PC-9 (cell line): ENCODE measurements at regions of chr1 and their contacts with region 1.

Region 1: DNA sequence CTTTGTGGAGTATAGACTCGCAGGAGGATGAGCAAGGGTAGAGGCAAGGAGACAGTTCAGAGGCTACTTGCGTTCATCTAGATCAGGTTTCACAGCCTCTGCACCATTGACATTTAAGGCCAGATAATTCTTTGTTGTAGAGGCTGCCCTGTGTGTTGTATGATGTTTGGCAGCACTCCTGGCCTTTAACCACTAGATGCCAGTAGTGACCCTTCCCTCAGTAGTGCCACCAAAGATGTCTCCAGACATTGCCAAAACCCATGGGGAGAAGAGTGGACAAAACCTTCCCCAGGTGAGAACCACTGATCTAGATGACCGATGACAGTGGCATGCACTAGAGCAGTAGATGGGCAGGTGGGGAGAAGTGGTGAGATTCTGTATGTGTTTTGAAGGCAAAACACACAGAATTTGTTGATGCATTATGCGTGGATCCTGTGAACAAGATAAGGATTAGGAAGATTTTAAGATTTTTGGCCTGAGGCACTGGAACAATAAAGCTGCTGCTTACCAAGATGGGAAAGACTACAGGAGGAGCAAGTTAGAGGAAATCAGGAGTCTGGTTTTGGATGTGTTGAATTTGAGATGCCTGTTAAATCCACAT is 9.9 kb upstream of the COG2 start:
- DNase-seq: peak; percentile 44 to 53
- H3K4me3 ChIP-seq: no peak overlapping the region
- H3K27ac ChIP-seq: no peak overlapping the region
- H3K4me1 ChIP-seq: no peaks in the 10 kb centered on the region
- H3K27me3 ChIP-seq: peaks cover 37% of the 10 kb centered on the region
- CTCF ChIP-seq: peak; percentile 74

Region 2: DNA sequence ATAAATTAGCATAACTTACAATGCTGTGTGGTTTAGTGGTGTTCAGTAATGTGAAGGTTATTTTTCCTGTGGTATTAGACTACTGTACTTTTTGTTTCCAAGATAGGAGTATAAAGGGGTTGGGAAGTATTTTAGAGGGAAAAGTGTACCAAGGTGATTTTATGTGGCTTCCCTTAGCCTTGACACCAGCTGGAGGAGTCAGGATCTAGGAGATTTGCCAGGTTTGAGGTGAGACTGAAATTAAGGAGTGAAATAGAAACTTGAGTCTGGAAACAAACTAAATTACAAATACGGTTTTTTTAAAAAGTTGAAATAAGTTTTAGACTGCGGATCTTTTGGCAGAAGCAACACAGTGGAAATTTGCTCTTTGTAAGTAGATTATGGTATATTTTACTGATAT is 42.2 kb after region 1 on chr1:
- CTCF ChIA-PET with region 1: interaction called, 12 read pairs
- POLR2A ChIA-PET with region 1: no interaction called
- intact Hi-C with region 1: no loop called
- DNase-seq: no peak
- H3K4me3 ChIP-seq: no peak overlapping the region
- H3K27ac ChIP-seq: no peak overlapping the region
- H3K4me1 ChIP-seq: no peaks in the 10 kb centered on the region
- H3K27me3 ChIP-seq: no peaks in the 10 kb centered on the region
- CTCF ChIP-seq: no peak

Region 3: DNA sequence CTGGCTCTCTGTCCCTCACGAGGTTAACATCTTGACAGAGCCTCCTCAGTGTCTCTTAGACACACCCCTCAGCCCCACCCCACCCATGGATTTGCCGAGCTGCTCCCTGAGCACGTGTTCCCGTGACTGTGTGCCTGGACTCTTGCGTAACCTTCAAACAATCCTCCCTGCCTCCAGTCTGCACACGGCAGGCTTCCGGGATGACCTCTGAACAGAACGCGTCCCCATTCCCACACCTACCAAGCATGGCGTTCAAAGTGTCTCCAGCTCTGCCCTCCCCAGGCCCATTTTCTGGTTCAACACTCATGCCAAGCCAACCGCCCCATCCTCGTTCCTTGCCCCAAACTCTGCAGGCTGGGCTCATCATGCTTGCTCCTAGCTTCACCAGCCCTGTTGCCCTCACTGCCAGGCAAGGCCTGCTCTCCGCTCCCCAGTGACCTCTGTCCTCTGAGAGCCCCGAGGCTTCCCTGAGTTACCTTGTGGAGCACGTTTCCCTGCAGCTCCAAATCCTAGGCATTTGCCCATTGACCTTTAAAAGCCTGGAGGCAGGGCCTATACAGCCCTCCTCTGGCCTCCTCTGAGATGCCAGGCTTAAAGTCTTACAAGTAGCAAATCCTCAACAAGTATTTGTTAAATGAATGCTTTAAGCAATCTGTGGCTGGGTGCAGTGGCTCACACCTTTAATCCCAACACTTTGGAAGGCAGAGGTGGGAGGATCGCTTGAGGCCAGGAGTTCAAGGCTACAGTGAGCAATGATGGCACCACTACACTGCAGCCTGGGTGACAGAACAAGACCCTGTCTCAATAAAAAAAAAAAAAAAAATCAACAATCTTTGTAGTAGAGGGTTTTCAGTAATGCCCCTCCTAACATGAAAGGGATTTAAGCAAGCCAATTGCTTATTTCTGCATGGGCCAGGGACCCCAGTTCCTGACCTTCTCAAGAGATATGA is 76.5 kb after region 1 on chr1:
- CTCF ChIA-PET with region 1: no interaction called
- POLR2A ChIA-PET with region 1: no interaction called
- intact Hi-C with region 1: no loop called
- DNase-seq: peak; percentile 36 to 44
- H3K4me3 ChIP-seq: no peak overlapping the region
- H3K27ac ChIP-seq: no peak overlapping the region
- H3K4me1 ChIP-seq: no peaks in the 10 kb centered on the region; the same call in 1 of the 2 replicates
- H3K27me3 ChIP-seq: no peaks in the 10 kb centered on the region
- CTCF ChIP-seq: no peak

Region 4: DNA sequence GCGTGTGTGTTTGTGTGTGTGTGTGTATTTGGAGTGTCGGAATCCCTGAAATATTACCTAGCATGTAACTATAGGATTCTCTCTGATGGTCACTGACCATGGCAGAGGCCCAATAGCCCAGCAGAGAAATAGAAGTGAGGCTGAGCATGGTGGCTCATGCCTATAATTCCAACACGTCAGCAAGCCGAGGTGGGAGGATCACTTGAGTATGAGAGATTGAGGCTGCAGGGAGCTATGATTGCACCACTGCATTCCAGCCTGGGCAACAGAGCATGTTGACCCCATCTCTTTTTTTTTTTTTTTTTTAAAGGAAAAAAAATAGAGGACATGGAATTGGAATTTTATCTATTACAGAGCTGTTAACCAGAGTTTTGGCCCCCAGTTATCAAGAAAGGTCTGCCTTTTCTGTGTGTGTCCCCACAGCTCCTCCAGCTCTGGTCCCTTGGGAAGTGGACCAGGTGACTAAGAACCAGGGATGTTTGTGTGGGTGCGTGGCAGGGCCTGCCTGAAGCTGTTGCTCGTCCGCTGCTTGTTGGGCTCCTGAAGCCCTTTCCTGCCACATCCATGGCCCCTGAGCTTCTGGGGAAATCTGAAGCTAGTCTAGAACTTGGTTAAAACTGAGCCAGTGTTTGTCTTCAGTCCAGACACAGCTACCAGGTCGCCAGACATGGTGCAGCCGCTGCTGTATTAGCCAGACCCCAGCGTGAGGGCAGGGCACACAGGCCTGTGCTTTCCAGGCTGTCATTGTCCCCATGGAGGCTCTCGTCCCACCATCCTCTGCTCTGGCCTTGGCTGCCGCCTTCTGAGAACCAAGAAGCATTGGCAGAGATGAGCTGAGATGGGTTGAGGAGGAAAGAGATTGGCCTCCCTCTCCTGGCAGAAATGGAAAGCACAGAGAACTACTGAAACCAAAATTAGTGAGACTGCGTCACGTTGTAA is 140.4 kb after region 1 on chr1:
- CTCF ChIA-PET with region 1: interaction called, 13 read pairs
- POLR2A ChIA-PET with region 1: no interaction called
- intact Hi-C with region 1: loop called (anchors 2 kb)
- DNase-seq: peak; percentile 24 to 52
- H3K4me3 ChIP-seq: no peak overlapping the region
- H3K27ac ChIP-seq: no peak overlapping the region
- H3K4me1 ChIP-seq: peaks cover 11% of the 10 kb centered on the region; the same call in 1 of the 2 replicates
- H3K27me3 ChIP-seq: peaks cover 30% of the 10 kb centered on the region
- CTCF ChIP-seq: peak; percentile 61

Region 5: DNA sequence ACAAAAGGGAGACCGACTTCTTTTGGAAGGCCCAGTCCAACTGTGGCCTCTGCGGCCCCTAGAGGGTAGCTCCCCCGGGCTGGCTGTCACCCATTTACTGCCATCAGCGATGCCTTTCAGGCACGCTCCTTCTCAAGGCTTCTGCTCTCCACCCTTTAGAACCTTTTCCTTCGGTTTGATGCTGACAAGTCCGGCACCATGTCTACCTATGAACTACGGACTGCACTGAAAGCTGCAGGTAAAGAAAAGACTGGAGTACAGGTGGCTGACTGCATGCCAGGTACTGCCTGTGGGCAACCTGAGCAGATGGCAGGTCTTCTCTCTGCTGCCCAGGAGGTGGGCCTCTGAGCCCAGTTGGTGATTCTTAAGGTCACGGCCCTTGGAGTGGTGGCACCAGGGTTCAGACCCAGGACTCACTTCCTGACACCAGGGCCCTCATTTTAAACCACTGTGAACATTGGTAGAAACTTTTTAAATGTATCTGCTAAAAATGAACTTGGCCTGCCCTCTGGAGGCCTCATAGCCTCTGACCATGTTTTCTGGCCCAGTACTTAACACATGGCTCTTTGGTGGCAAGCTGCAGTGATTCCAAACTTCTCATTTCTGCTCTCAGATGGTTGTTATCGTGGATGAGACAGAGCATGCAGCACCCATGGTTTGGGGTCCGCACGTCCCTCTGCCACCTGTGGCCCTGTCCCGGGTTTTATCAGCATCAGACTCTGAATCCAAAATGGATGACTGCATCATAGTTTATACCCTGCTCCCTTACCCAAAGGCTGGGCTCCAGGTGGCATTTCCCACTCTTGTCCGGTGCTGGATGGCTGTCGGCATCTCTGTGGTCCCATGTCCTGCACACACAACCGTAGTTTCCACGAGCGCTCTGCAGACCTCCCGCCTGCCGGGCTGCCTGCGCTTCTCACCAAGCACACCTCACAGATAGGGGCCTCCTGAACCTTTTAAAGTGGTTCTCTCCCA is 160.6 kb after region 1 on chr1:
- CTCF ChIA-PET with region 1: no interaction called
- POLR2A ChIA-PET with region 1: no interaction called
- intact Hi-C with region 1: loop called (anchors 1 kb)
- DNase-seq: peak in 1 of 2 experiments; percentile 12
- H3K4me3 ChIP-seq: no peak overlapping the region
- H3K27ac ChIP-seq: no peak overlapping the region
- H3K4me1 ChIP-seq: no peaks in the 10 kb centered on the region
- H3K27me3 ChIP-seq: peaks cover 8% of the 10 kb centered on the region
- CTCF ChIP-seq: peak; percentile 46

Region 6: DNA sequence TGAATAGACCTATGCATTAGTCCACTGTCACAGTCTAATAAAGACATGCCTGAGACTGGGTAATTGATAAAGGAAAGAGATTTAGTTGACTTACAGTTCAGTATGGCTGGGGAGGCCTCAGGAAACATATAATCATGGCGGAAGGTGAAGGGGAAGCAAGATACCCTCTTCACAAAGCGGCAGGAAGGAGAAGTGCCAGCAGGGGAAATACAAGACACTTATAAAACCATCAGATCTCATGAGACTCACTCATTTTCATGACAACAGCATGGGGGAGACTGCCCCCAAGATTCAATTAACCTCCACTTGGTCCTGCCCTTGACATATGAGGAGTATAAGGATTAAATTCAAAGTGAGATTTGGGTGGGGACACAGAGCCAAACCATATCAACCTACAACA is 174.2 kb after region 1 on chr1:
- CTCF ChIA-PET with region 1: no interaction called
- POLR2A ChIA-PET with region 1: no interaction called
- intact Hi-C with region 1: no loop called
- DNase-seq: no peak
- H3K4me3 ChIP-seq: no peak overlapping the region
- H3K27ac ChIP-seq: no peak overlapping the region
- H3K4me1 ChIP-seq: no peaks in the 10 kb centered on the region
- H3K27me3 ChIP-seq: no peaks in the 10 kb centered on the region
- CTCF ChIP-seq: no peak

Region 7: DNA sequence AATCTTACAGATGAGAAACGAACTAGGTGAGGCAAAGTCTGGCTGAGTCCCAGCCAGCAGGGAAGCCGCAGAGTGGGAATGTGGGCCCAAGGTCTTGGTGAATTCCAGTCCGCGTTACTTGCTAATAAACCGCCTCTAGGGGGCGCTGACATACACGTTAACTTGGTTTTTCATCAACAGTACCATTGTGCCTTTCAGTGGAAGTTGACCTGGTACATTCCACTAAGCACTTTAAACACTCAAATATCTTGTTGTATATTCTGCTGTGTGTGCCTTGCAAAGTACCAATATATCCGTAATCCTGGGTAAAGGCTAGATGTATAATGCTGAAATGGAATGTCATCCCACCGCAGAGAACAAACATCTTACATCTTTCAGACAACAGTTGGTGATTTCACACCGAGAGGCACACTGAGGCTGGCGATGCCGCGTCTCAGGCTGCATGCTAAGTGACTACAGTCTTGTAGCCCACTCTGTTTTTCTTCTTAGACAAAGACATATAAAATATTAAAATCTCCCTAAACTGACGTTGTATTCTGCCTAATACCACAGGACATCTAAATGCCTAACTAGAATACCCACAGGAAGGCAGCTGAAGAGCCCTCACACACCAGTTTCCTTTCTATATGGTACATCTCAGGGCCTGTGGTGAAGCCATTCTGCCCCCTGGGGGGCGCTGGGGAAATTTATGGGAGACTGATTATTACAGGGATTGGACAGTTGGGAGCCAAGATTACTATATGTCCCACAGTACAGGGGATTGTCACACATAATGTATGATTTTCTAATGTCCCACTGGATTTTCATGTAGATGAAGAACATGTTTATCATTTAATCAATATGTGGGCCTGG is 285.1 kb after region 1 on chr1:
- CTCF ChIA-PET with region 1: no interaction called
- POLR2A ChIA-PET with region 1: no interaction called
- intact Hi-C with region 1: loop called (anchors 1 kb)
- DNase-seq: peak in 1 of 2 experiments; percentile 38
- H3K4me3 ChIP-seq: no peak overlapping the region
- H3K27ac ChIP-seq: no peak overlapping the region
- H3K4me1 ChIP-seq: no peaks in the 10 kb centered on the region
- H3K27me3 ChIP-seq: no peaks in the 10 kb centered on the region
- CTCF ChIP-seq: peak; percentile 65

Region 8: GRCh38 chr1:230978491-230979388 is 346.4 kb after region 1 on chr1 and contains the starts of genes ARV1 and TTC13:
- CTCF ChIA-PET with region 1: no interaction called
- POLR2A ChIA-PET with region 1: no interaction called
- intact Hi-C with region 1: loop called (anchors 1 kb)
- DNase-seq: peak; percentile 97 to 98
- H3K4me3 ChIP-seq: peak within 1 kb of the TSS; percentile 86
- H3K27ac ChIP-seq: no peak within 1 kb of the TSS
- H3K4me1 ChIP-seq: peaks cover 19% of the 10 kb centered on the region
- H3K27me3 ChIP-seq: no peaks in the 10 kb centered on the region
- CTCF ChIP-seq: peak; percentile 50; the same call in 1 of the 2 replicates
- total RNA-seq, gene ARV1: 8.0 and 12.0 TPM in 2 replicates
- total RNA-seq, gene TTC13: 7.5 and 10.7 TPM in 2 replicates

Region 9: GRCh38 chr1:231603598-231604275 is 971.4 kb after region 1 on chr1:
- CTCF ChIA-PET with region 1: no interaction called
- POLR2A ChIA-PET with region 1: no interaction called
- intact Hi-C with region 1: loop called (anchors 10 kb)
- DNase-seq: peak; percentile 40 to 53
- H3K4me3 ChIP-seq: peak overlapping the region; percentile 66
- H3K27ac ChIP-seq: no peak overlapping the region
- H3K4me1 ChIP-seq: peaks cover 12% of the 10 kb centered on the region
- H3K27me3 ChIP-seq: no peaks in the 10 kb centered on the region
- CTCF ChIP-seq: peak; percentile 83